ENCODE measurements at regions of chr19 and their contacts with region 1.

Region 1: DNA sequence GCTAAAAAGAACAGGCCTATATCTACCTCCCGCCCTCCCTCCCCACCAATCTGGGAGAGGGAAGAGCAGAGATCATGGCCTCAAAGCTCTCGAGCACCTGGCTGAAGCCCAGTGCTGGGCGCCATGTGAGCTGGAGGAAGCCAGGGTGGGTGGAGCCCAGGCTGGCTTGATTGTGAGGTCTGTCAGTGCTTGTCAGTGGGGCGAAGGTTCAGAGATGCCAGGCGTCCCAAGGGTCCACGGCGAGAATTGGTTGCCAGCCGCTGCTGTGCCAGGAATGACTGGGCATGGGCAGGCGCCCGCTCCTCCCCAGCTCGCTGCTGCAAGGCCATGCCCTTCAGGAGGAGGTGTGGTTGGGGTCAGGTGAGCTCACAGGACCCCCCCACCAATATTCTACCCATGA is 11.5 kb downstream of the BEST2 start:
- DNase-seq: no peak
- ATAC-seq: no peak
- H3K4me3 ChIP-seq: no peak overlapping the region
- H3K27ac ChIP-seq: no peak overlapping the region
- H3K4me1 ChIP-seq: peaks cover 8% of the 10 kb centered on the region
- H3K27me3 ChIP-seq: no peaks in the 10 kb centered on the region
- CTCF ChIP-seq: no peak
- POLR2A ChIP-seq: no peak

Region 2: GRCh38 chr19:12801466-12802266 is 38.6 kb after region 1 on chr19 and contains the starts of genes PRDX2 and THSD8:
- intact Hi-C with region 1: loop called (anchors 5 kb)
- DNase-seq: peak; percentile 84 to 90 (median 88)
- ATAC-seq: peak; percentile 87
- H3K4me3 ChIP-seq: peak within 1 kb of the TSS; percentile 50 to 73
- H3K27ac ChIP-seq: peak within 1 kb of the TSS; percentile 66 to 80 (median 75)
- H3K4me1 ChIP-seq: peaks cover 33% of the 10 kb centered on the region
- H3K27me3 ChIP-seq: no peaks in the 10 kb centered on the region
- CTCF ChIP-seq: peak in 1 of 7 experiments; percentile 13
- POLR2A ChIP-seq: peak; percentile 96 to 99 (median 99)
- total RNA-seq, gene PRDX2: 105 to 146 TPM
- total RNA-seq, gene THSD8: not detected

Region 3: DNA sequence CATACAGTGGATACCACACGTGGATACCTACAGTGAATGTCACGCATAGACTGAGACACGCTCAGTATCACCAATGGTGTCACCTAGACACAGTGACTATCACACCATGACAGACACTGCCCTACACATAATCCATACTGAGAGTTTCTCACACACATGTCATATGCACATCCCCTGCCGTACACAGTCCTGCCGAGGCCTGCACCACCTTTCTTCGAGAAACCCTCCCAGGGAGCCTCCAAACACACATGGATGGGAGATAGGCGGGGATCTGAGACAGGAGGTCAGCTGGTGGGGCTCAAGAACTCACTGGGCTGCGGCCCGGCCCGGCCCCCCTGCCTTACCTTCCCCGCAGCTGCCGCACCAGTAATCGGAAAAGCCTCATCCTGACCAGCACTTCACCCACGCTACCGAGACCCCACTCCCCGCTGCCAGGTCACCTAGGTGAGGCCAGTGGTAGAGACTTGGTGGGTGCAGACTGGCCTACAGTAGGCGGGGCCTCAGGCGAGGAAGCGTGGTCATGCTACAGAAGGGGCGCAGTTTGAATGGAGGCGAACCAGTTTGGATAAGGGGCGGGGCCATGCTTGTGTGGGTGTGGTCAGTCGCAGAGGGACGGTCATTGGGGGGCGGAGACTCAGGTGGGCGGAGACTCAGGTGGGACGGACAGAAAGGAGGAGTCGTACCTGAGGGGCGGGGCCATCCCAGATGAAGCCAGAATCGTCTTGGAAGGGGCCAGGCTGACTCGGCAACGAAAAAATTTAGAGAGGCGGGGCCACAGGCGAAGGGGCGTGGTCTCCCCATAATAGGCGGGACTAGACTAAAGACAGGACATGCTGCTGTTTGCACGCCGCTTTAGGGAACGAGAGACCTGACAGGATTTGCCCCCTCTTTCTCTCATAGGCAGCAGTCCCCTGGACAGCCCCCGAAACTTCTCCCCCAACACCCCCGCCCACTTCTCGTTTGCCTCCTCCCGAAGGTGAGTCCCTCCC is 77.3 kb after region 1 on chr19:
- intact Hi-C with region 1: loop called (anchors 5 kb)
- DNase-seq: peak; percentile 52 to 72 (median 66)
- ATAC-seq: peak; percentile 45
- H3K4me3 ChIP-seq: no peak overlapping the region
- H3K27ac ChIP-seq: no peak overlapping the region
- H3K4me1 ChIP-seq: peaks cover 24% of the 10 kb centered on the region
- H3K27me3 ChIP-seq: peaks cover 0 to 31% of the 10 kb centered on the region in 2 donors
- CTCF ChIP-seq: no peak
- POLR2A ChIP-seq: no peak

Region 4: GRCh38 chr19:12899891-12900518 is 136.9 kb after region 1 on chr19:
- intact Hi-C with region 1: no loop called
- DNase-seq: no peak
- ATAC-seq: no peak
- H3K4me3 ChIP-seq: no peak overlapping the region
- H3K27ac ChIP-seq: no peak overlapping the region
- H3K4me1 ChIP-seq: no peaks in the 10 kb centered on the region
- H3K27me3 ChIP-seq: no peaks in the 10 kb centered on the region
- CTCF ChIP-seq: no peak
- POLR2A ChIP-seq: no peak